CD4-positive, alpha-beta memory T cell (primary cell): ENCODE measurements at regions of chr6 and their contacts with region 1.

Region 1: DNA sequence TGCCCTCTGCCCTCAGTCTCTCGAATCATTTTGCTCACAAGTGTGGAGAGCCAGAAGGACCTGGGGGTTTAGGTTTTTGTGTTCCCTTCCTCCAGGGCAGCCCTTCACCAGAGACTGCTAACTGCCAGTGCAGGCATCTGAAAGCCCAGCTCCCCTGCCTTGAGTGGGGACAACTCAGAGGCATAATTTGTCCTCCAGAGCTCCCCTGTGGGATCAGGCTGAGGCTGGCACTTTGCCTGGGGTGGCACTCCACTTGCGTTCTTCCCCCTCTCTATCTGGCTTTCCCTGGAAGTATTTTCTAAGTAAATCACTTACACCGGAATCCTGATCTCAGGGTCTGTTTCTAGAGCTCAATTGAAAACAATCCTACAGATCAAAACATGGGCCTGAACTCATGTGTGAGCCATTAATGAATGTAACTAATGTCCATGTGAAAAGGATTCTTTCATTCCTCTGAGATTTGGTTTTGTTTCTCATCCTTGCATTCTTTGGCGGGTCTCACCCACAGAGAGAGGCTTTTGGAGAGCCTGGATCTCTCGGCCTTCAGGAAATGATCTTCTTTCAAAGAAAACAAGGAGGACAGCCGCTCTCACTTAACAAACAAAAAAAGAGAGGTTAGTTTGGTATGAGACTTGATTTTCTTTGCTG is 125.7 kb upstream of the RIPOR2 start:
- DNase-seq: no peak
- H3K4me3 ChIP-seq: no peak overlapping the region
- H3K4me3 Mint-ChIP-seq: no peak overlapping the region
- H3K27ac ChIP-seq: no peak overlapping the region
- H3K27ac Mint-ChIP-seq: peak overlapping the region in 1 of 7 donors; percentile 37
- H3K4me1 ChIP-seq: peaks cover 23% of the 10 kb centered on the region
- H3K4me1 Mint-ChIP-seq: peaks cover 11 to 29% (median 24%) of the 10 kb centered on the region in 4 donors
- H3K27me3 ChIP-seq: no peaks in the 10 kb centered on the region
- H3K27me3 Mint-ChIP-seq: no peaks in the 10 kb centered on the region

Region 2: GRCh38 chr6:24996269-24996836 is 65.1 kb before region 1 on chr6:
- CTCF ChIA-PET with region 1: no interaction called
- POLR2A ChIA-PET with region 1: no interaction called
- intact Hi-C with region 1: no loop called
- DNase-seq: no peak
- H3K4me3 ChIP-seq: no peak overlapping the region
- H3K4me3 Mint-ChIP-seq: peak overlapping the region in 4 of 8 donors; percentile 16 to 54 (median 24)
- H3K27ac ChIP-seq: no peak overlapping the region
- H3K27ac Mint-ChIP-seq: peak overlapping the region; percentile 25 to 88 (median 58)
- H3K4me1 ChIP-seq: peaks cover 74% of the 10 kb centered on the region
- H3K4me1 Mint-ChIP-seq: peaks cover 64 to 90% (median 77%) of the 10 kb centered on the region in 4 donors
- H3K27me3 ChIP-seq: no peaks in the 10 kb centered on the region
- H3K27me3 Mint-ChIP-seq: no peaks in the 10 kb centered on the region

Region 3: GRCh38 chr6:25035527-25036435 is 25.6 kb before region 1 on chr6:
- CTCF ChIA-PET with region 1: interaction called, 591 read pairs
- POLR2A ChIA-PET with region 1: interaction called, 16 read pairs
- intact Hi-C with region 1: no loop called
- DNase-seq: peak; percentile 34 to 51 (median 37)
- H3K4me3 ChIP-seq: peak overlapping the region; percentile 44 to 68
- H3K4me3 Mint-ChIP-seq: peak overlapping the region; percentile 84 to 93 (median 90)
- H3K27ac ChIP-seq: peak overlapping the region; percentile 69
- H3K27ac Mint-ChIP-seq: peak overlapping the region; percentile 92 to 100 (median 96)
- H3K4me1 ChIP-seq: peaks cover 88% of the 10 kb centered on the region
- H3K4me1 Mint-ChIP-seq: peaks cover 61 to 88% (median 72%) of the 10 kb centered on the region in 4 donors
- H3K27me3 ChIP-seq: no peaks in the 10 kb centered on the region
- H3K27me3 Mint-ChIP-seq: no peaks in the 10 kb centered on the region